ENCODE measurements at regions of chrX and their contacts with region 1.

Region 1: DNA sequence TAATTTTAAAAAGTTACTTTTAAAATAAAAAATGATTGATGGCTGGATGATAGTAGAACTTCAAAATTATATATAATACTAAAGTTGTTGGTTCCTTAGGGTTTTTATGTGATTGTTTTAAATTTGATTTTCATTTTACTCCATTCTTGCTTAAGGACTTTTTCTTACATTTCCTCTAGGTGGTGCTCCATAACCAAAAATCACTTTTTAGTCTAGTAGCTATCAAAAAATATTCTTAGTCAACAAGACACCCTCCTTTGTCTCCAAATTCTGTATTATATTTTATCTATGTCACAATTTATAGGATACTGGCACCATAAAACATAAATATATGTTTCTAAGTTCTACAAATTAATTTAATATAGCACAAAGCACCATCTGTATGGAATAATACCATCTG is 67.2 kb upstream of the BRWD3 start:
- DNase-seq: peak in 1 of 2 experiments; percentile 48
- H3K4me3 ChIP-seq: no peak overlapping the region
- H3K4me1 ChIP-seq: no peaks in the 10 kb centered on the region
- H3K27me3 ChIP-seq: peaks cover 6% of the 10 kb centered on the region

Region 2: GRCh38 chrX:80511969-80512760 is 364.7 kb before region 1 on chrX:
- in situ Hi-C with region 1: no loop called
- DNase-seq: no peak
- H3K4me3 ChIP-seq: no peak overlapping the region
- H3K4me1 ChIP-seq: no peaks in the 10 kb centered on the region
- H3K27me3 ChIP-seq: no peaks in the 10 kb centered on the region

Region 3: GRCh38 chrX:80708781-80709180 is 168.1 kb before region 1 on chrX:
- in situ Hi-C with region 1: no loop called
- DNase-seq: peak in 1 of 2 experiments; percentile 90
- H3K4me3 ChIP-seq: no peak overlapping the region
- H3K4me1 ChIP-seq: peaks cover 10% of the 10 kb centered on the region
- H3K27me3 ChIP-seq: no peaks in the 10 kb centered on the region

Region 4: DNA sequence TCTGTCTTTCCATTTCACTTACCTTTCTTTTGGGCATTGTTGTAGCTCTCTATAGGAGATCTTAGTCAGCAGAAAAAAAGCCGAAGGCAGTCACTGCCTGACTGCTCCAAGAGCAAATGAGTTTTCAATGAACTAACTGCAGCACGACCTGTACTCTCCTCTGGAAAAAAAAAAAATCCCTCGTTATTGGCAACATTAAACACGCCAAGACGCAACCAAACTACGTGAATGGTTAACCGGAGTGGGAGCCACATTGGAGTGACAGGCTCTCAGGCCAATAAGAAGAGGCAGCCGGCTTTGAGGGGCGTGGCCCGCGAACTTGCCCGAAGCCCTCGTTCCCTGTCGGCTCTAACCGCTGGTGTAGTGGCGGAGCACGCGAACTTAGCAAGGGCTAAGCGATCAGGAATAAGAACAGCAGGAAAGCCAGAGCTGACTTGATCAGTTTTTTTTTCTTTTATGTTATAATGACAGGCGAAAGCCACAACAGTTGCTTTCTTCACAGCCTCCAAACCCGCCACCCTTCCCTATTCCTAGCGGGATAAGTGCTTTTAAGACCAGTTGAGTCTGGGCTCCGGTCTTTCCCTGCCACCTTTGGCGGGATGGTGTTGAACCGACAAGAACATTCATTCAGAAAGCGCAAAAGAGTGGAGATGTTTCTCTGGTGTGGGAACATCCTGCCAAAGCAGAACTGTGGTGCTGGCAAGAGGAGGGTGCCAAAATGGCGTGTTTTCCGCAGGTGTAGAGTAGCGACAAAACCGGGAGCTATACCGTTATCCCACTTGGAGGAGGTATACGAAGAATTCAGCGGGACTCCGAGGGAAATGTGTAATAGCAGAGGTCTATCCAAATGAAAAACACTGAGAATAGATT is 244.9 kb after region 1 on chrX:
- in situ Hi-C with region 1: no loop called
- DNase-seq: peak; percentile 96 to 97
- H3K4me3 ChIP-seq: peak overlapping the region; percentile 45
- H3K4me1 ChIP-seq: peaks cover 21% of the 10 kb centered on the region
- H3K27me3 ChIP-seq: no peaks in the 10 kb centered on the region

Region 5: GRCh38 chrX:81195712-81196111 is 318.8 kb after region 1 on chrX:
- in situ Hi-C with region 1: loop called (anchors 25 kb)
- DNase-seq: peak; percentile 64 to 81
- H3K4me3 ChIP-seq: no peak overlapping the region
- H3K4me1 ChIP-seq: no peaks in the 10 kb centered on the region; the same call in 1 of the 2 replicates
- H3K27me3 ChIP-seq: no peaks in the 10 kb centered on the region

Measured in HAP-1 (cell line).